ENCODE measurements at regions of chr11 and their contacts with region 1.

Region 1: GRCh38 chr11:7098235-7098832 is 9.5 kb downstream of the RBMXL2 start:
- DNase-seq: peak in 1 of 4 donors; percentile 3
- ATAC-seq: peak; percentile 52
- H3K4me3 ChIP-seq: no peak overlapping the region
- H3K27ac ChIP-seq: no peak overlapping the region
- H3K4me1 ChIP-seq: no peaks in the 10 kb centered on the region
- H3K27me3 ChIP-seq: no peaks in the 10 kb centered on the region
- CTCF ChIP-seq: peak; percentile 25 to 75 (median 73)
- POLR2A ChIP-seq: no peak

Region 2: DNA sequence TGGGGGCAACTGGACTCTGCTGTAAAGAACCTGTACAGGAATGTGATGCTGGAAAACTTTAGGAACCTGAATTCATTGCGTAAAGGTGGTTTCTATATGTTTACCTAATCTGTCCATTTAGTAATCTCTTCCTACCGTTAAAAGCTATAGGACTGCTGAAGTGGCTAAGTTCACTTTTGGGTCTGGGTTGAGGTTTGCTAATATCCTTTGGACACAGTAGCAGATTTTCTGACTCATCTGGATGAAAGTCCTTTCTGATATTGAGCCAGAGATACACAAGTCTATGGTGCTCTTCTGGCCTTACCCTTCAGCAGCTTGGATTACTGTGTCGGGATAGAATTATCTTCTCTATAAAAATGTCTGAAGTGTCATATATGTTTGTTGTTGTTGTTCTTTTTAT is 155.2 kb before region 1 on chr11:
- intact Hi-C with region 1: no loop called
- DNase-seq: no peak
- ATAC-seq: no peak
- H3K4me3 ChIP-seq: no peak overlapping the region
- H3K27ac ChIP-seq: no peak overlapping the region
- H3K4me1 ChIP-seq: no peaks in the 10 kb centered on the region
- H3K27me3 ChIP-seq: no peaks in the 10 kb centered on the region
- CTCF ChIP-seq: no peak
- POLR2A ChIP-seq: no peak

Region 3: GRCh38 chr11:7442588-7443215 is 344.4 kb after region 1 on chr11:
- intact Hi-C with region 1: loop called (anchors 5 kb)
- DNase-seq: peak; percentile 70 to 82 (median 72)
- ATAC-seq: no peak
- H3K4me3 ChIP-seq: no peak overlapping the region
- H3K27ac ChIP-seq: no peak overlapping the region
- H3K4me1 ChIP-seq: peaks cover 9% of the 10 kb centered on the region
- H3K27me3 ChIP-seq: no peaks in the 10 kb centered on the region
- CTCF ChIP-seq: peak; percentile 70 to 81 (median 74)
- POLR2A ChIP-seq: no peak

Region 4: GRCh38 chr11:7690648-7691047 is 592.3 kb after region 1 on chr11:
- intact Hi-C with region 1: loop called (anchors 10 kb)
- DNase-seq: peak in 1 of 4 donors; percentile 19
- ATAC-seq: no peak
- H3K4me3 ChIP-seq: no peak overlapping the region
- H3K27ac ChIP-seq: no peak overlapping the region
- H3K4me1 ChIP-seq: no peaks in the 10 kb centered on the region
- H3K27me3 ChIP-seq: no peaks in the 10 kb centered on the region
- CTCF ChIP-seq: peak in 1 of 7 experiments; percentile 47
- POLR2A ChIP-seq: no peak